PC-3 (cell line): ENCODE measurements at regions of chr7 and their contacts with region 1.

Region 1: DNA sequence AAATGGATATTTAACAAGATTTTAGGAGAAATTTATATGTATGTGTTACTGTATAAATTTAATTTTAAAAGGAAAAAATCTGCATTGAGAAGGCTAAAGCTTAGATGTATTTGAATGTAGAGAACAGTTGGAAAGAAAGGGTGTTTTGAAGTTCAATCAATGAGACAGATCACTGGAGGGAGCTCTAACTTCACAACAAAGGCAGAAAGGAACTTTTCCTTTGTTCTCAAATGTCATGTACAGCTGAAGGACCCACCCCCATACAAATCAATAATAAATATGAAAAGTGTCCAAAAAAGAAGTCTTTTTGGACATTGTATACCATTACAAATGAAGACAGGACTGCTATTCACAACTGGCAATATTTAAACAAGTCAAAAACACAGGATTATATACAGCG is 403.4 kb downstream of the DNAJB9 start:
- DNase-seq: no peak
- ATAC-seq: no peak
- H3K4me3 ChIP-seq: no peak overlapping the region
- H3K27ac ChIP-seq: no peak overlapping the region
- H3K4me1 ChIP-seq: no peaks in the 10 kb centered on the region
- H3K27me3 ChIP-seq: no peaks in the 10 kb centered on the region
- CTCF ChIP-seq: peak; percentile 23; the same call in 1 of the 2 replicates

Region 2: GRCh38 chr7:108660460-108660859 is 312.6 kb before region 1 on chr7:
- CTCF ChIA-PET with region 1: no interaction called
- POLR2A ChIA-PET with region 1: no interaction called
- intact Hi-C with region 1: loop called (anchors 5 kb)
- DNase-seq: peak; percentile 42
- ATAC-seq: peak; percentile 58
- H3K4me3 ChIP-seq: no peak overlapping the region
- H3K27ac ChIP-seq: no peak overlapping the region
- H3K4me1 ChIP-seq: no peaks in the 10 kb centered on the region
- H3K27me3 ChIP-seq: peaks cover 4% of the 10 kb centered on the region
- CTCF ChIP-seq: peak; percentile 68

Region 3: GRCh38 chr7:109343662-109344061 is 370.6 kb after region 1 on chr7:
- CTCF ChIA-PET with region 1: no interaction called
- POLR2A ChIA-PET with region 1: no interaction called
- intact Hi-C with region 1: loop called (anchors 10 kb)
- DNase-seq: no peak
- ATAC-seq: no peak
- H3K4me3 ChIP-seq: no peak overlapping the region
- H3K27ac ChIP-seq: no peak overlapping the region
- H3K4me1 ChIP-seq: no peaks in the 10 kb centered on the region
- H3K27me3 ChIP-seq: no peaks in the 10 kb centered on the region
- CTCF ChIP-seq: no peak